AG04449 (cell line): ENCODE measurements at regions of chr15 and their contacts with region 1.

Region 1: GRCh38 chr15:64836023-64836536 is 5.6 kb upstream of the PLEKHO2 start:
- DNase-seq: no peak
- H3K4me3 ChIP-seq: no peak overlapping the region
- CTCF ChIP-seq: no peak

Region 2: DNA sequence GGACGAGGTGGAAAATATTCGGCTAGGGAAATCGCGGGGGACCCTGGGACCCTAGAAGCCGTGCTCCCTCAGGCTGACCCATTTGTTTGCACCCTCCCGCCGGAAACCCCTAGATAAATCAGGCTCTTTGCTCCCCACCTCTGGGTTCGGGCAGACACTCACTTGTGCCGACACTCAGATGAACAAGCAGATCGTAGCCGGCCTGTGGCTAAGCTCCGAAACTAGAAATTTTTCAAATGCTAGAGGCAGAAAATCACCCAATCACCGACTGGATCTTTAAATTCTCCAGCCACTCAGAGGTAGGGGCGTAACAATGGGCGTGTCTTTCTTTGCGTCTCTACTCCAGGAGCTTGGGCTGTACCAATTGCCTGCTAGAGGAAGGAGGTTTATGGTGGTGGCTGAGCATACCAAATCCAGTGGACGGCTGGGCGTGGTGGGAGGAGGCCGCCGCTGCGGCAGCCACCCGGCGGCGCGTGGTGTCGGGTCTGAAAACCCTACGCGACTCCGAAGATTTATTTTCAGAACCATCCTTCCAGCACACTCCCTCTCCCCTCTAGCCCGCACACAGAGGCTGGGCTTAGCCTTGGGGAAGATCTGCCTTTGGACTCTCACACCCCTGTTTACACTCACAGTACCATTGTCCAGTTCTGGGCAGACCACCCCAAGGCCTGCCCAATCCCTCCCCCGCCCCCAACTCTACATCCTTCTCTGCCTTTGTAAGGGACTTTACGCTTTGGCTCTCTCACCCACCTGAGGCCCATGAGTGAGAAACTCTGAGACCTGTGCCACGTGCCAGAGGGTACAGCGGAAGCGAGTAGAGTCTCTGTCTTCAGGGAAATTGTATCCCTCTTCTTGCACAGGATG is 10.4 kb before region 1 on chr15 and contains the start of gene PIF1:
- CTCF ChIA-PET with region 1: interaction called, 12 read pairs
- POLR2A ChIA-PET with region 1: interaction called, 6 read pairs
- DNase-seq: peak; percentile 93
- H3K4me3 ChIP-seq: peak within 1 kb of the TSS; percentile 68
- CTCF ChIP-seq: no peak